K562 (cell line): ENCODE measurements at regions of chr6 and their contacts with region 1.

Region 1: GRCh38 chr6:31689249-31690110 is 8.6 kb upstream of the LY6G5C start:
- DNase-seq: peak in 2 of 4 experiments; percentile 66 to 72
- ATAC-seq: peak; percentile 60
- H3K4me3 ChIP-seq: no peak overlapping the region; the same call in 1 of the 2 replicates
- H3K27ac ChIP-seq: peak overlapping the region; percentile 88
- H3K4me1 ChIP-seq: peaks cover 63 to 65% of the 10 kb centered on the region in 2 experiments
- H3K27me3 ChIP-seq: no peaks in the 10 kb centered on the region
- CTCF ChIP-seq: peak; percentile 63 to 96 (median 68)
- EP300 ChIP-seq: no peak
- POLR2A ChIP-seq: no peak
- RAD21 ChIP-seq: peak in 1 of 2 experiments; percentile 45; a peak in 2 of 4 replicates

Region 2: DNA sequence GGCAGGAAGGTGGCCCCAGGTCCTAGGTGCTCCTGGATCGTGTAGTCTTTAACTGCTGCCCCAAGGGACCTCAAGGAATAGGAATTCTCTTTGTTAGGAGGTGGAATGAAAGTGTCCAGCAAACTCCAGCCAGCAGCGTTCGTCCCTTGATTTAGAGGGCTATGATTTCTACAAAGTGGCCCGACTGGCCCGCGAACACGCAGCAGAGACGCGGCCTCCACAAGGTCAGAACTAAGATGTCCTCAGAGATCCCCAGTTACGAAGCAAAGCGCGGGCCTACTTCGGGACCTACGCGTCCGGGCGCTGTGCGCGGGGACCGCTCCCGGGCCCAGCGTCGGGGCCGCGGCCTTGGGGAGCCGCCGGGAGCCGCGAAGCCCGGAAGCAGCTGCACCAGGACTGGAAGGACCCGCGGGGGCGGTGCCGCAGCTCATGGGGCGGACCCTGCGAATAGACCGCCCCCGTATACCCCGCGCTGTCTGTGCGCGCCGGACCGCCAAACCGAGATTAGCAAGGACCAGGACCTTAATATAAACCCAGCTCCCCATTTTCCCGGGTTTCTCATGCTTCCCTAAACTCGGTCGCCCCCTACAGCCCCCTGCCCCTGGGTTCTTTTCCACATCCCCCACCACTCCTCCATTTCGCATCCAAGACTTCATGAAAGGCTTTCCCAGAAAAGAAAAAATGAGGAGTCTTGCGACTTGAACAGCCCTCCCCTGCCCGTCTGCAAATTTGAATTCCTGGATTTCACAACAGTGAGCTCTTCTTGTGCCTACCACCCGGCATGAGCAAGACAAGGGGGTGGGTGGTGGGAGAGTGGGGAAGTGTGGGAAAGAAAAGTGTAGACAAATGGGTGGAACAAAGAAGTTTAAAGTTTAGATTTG is 28.9 kb before region 1 on chr6 and contains the start of gene C6orf47:
- CTCF ChIA-PET with region 1: interaction called, 3 read pairs
- POLR2A ChIA-PET with region 1: interaction called, 32 read pairs
- in situ Hi-C with region 1: no loop called
- intact Hi-C with region 1: no loop called
- DNase-seq: peak; percentile 93 to 99 (median 96)
- ATAC-seq: peak; percentile 82
- H3K4me3 ChIP-seq: peak within 1 kb of the TSS; percentile 52
- H3K27ac ChIP-seq: peak within 1 kb of the TSS; percentile 80
- H3K4me1 ChIP-seq: peaks cover 47 to 65% of the 10 kb centered on the region in 2 experiments
- H3K27me3 ChIP-seq: no peaks in the 10 kb centered on the region
- CTCF ChIP-seq: no peak
- EP300 ChIP-seq: 0 out of 2 replicates have a peak, but pooled peaks have one; percentile 62
- POLR2A ChIP-seq: peak; percentile 93
- RAD21 ChIP-seq: peak; percentile 5 to 28; a peak in 3 of 4 replicates
- polyA plus RNA-seq, gene C6orf47: 0.14 to 0.27 TPM

Region 3: DNA sequence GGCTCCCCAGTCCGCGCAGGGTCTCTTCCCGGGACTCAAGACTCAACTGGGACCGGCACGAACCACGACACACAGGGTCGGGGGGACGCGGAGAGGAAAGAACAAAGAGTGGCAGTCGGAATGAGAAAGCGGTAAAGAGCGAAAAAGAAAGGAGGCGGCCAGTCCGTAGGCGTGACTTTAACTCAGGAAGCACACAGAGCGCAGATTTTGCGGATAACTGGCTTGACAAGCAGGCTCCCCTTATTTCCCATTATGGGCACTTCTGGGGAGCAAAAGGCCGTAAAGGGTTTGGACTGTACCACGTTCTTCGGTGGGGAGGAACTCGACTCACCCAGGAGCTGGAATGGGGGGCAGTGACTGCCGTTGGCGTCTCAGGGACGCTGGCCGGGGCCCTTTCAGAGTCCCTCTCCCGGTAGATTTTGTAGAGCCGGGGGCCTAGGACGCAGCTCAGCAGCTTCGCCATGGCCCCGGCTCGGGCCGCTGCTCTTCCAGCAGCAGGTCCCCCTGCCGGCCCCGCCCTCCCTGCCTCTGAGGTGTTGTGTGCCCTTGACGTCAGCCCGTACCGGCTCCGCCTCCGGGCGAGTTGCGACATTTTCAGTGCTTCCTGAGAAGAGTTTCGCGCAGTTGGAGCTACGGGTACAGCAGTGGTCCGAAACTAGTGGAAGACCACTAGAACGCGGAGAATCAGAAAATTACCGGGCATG is 13.5 kb after region 1 on chr6 and contains the start of gene ABHD16A:
- CTCF ChIA-PET with region 1: interaction called, 3 read pairs
- POLR2A ChIA-PET with region 1: interaction called, 158 read pairs
- in situ Hi-C with region 1: no loop called
- intact Hi-C with region 1: loop called (anchors 1 kb)
- DNase-seq: peak; percentile 100
- ATAC-seq: peak; percentile 95
- H3K4me3 ChIP-seq: peak within 1 kb of the TSS; percentile 68
- H3K27ac ChIP-seq: peak within 1 kb of the TSS; percentile 93
- H3K4me1 ChIP-seq: peaks cover 22 to 34% of the 10 kb centered on the region in 2 experiments
- H3K27me3 ChIP-seq: no peaks in the 10 kb centered on the region
- CTCF ChIP-seq: peak in 2 of 3 experiments; percentile 14 to 17; a peak in 1 of 6 replicates
- EP300 ChIP-seq: peak; percentile 73
- POLR2A ChIP-seq: peak; percentile 98
- RAD21 ChIP-seq: peak in 1 of 2 experiments; percentile 21; a peak in 1 of 4 replicates
- polyA plus RNA-seq, gene ABHD16A: 25.8 to 49.7 TPM

Region 4: GRCh38 chr6:31712296-31712695 is 22.8 kb after region 1 on chr6:
- CTCF ChIA-PET with region 1: no interaction called
- POLR2A ChIA-PET with region 1: interaction called, 158 read pairs
- in situ Hi-C with region 1: no loop called
- intact Hi-C with region 1: no loop called
- DNase-seq: no peak
- ATAC-seq: no peak
- H3K4me3 ChIP-seq: no peak overlapping the region
- H3K27ac ChIP-seq: no peak overlapping the region
- H3K4me1 ChIP-seq: peaks cover 25 to 42% of the 10 kb centered on the region in 2 experiments
- H3K27me3 ChIP-seq: no peaks in the 10 kb centered on the region
- CTCF ChIP-seq: no peak
- EP300 ChIP-seq: no peak
- POLR2A ChIP-seq: no peak
- RAD21 ChIP-seq: no peak

Region 5: GRCh38 chr6:31769684-31770371 is 80.3 kb after region 1 on chr6:
- CTCF ChIA-PET with region 1: interaction called, 3 read pairs
- POLR2A ChIA-PET with region 1: interaction called, 9 read pairs
- in situ Hi-C with region 1: loop called (anchors 5 kb)
- intact Hi-C with region 1: no loop called
- DNase-seq: peak; percentile 98 to 100 (median 100)
- ATAC-seq: peak; percentile 91
- H3K4me3 ChIP-seq: no peak overlapping the region
- H3K27ac ChIP-seq: peak overlapping the region; percentile 26; the same call in 2 of the 3 replicates
- H3K4me1 ChIP-seq: peaks cover 24 to 68% of the 10 kb centered on the region in 2 experiments
- H3K27me3 ChIP-seq: no peaks in the 10 kb centered on the region
- CTCF ChIP-seq: peak; percentile 98 to 100 (median 99)
- EP300 ChIP-seq: peak; percentile 28
- POLR2A ChIP-seq: no peak
- RAD21 ChIP-seq: peak; percentile 99 to 100

Region 6: DNA sequence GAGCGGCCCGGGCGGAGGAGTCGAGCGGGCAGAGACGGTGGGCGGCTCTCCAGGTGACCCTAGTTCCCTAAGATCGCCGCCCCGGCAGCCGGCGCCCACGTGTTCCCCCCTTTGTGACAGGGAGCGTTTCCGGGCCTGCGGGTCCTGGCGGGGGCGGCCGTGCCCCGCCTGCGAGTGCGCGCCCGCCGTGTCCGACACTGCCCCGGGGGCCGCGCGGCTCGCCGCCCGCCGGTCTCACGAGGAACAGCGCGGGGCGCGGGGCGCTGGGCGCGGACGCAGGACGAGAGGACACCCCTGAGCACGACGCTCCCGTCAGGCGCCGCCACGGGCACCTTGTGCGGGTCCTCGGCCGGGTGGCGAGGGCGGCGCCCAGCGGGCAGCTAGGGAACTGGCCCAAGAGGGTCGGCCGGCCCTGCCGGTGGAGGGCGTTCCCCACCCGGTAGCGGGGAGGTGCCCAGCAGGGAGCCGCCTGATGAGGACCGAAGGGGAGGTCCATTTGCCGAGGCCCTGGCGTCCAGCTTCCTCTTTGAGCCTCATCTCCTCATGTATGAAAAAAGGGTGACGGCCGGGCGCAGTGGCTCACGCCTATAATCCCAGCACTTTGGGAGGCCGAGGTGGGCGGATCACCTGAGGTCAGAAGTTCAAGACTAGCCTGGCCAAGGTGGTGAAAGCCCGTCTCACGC is 106.3 kb after region 1 on chr6 and contains the start of gene VARS1:
- CTCF ChIA-PET with region 1: no interaction called
- POLR2A ChIA-PET with region 1: interaction called, 10 read pairs
- in situ Hi-C with region 1: no loop called
- intact Hi-C with region 1: no loop called
- DNase-seq: peak; percentile 99 to 100 (median 100)
- ATAC-seq: peak; percentile 92
- H3K4me3 ChIP-seq: peak within 1 kb of the TSS; percentile 61
- H3K27ac ChIP-seq: peak within 1 kb of the TSS; percentile 97
- H3K4me1 ChIP-seq: peaks cover 17 to 44% of the 10 kb centered on the region in 2 experiments
- H3K27me3 ChIP-seq: no peaks in the 10 kb centered on the region
- CTCF ChIP-seq: peak; percentile 99 to 100 (median 100)
- EP300 ChIP-seq: peak; percentile 59; the same call in 1 of the 2 replicates
- POLR2A ChIP-seq: peak; percentile 38; the same call in 1 of the 2 replicates
- RAD21 ChIP-seq: peak; percentile 99 to 100
- polyA plus RNA-seq, gene VARS1: 2.9 to 10.4 TPM

Region 7: DNA sequence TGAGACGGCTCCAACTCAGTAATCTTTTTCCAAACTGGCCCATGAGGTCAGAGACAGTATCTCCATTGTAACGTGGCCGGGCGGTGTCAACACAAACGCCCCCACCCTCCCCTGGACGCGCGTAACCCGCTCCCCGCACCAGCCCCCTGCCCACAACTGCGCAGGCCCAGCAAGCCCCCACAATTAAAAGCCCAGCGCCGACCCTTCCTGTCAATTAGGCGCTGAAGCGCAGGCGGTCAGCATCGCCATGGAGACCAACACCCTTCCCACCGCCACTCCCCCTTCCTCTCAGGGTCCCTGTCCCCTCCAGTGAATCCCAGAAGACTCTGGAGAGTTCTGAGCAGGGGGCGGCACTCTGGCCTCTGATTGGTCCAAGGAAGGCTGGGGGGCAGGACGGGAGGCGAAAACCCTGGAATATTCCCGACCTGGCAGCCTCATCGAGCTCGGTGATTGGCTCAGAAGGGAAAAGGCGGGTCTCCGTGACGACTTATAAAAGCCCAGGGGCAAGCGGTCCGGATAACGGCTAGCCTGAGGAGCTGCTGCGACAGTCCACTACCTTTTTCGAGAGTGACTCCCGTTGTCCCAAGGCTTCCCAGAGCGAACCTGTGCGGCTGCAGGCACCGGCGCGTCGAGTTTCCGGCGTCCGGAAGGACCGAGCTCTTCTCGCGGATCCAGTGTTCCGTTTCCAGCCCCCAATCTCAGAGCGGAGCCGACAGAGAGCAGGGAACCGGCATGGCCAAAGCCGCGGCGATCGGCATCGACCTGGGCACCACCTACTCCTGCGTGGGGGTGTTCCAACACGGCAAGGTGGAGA is 125.8 kb after region 1 on chr6 and contains the starts of genes HSPA1A and HSPA1L:
- CTCF ChIA-PET with region 1: no interaction called
- POLR2A ChIA-PET with region 1: interaction called, 11 read pairs
- in situ Hi-C with region 1: no loop called
- intact Hi-C with region 1: no loop called
- DNase-seq: peak; percentile 97 to 100 (median 98)
- ATAC-seq: peak; percentile 73
- H3K4me3 ChIP-seq: peak within 1 kb of the TSS; percentile 54
- H3K27ac ChIP-seq: peak within 1 kb of the TSS; percentile 97
- H3K4me1 ChIP-seq: peaks cover 29 to 37% of the 10 kb centered on the region in 2 experiments
- H3K27me3 ChIP-seq: no peaks in the 10 kb centered on the region
- CTCF ChIP-seq: 0 out of 6 replicates have a peak, but pooled peaks of 1 of the 3 experiments have one; percentile 1
- EP300 ChIP-seq: peak; percentile 85
- POLR2A ChIP-seq: peak; percentile 100
- RAD21 ChIP-seq: peak; percentile 16 to 30; a peak in 3 of 4 replicates
- polyA plus RNA-seq, gene HSPA1A: 2.2 to 4.1 TPM
- polyA plus RNA-seq, gene HSPA1L: 0.14 to 0.34 TPM